Ascending aorta (tissue), 2 donors: ENCODE measurements at regions of chr13 and their contacts with region 1.

Region 1: DNA sequence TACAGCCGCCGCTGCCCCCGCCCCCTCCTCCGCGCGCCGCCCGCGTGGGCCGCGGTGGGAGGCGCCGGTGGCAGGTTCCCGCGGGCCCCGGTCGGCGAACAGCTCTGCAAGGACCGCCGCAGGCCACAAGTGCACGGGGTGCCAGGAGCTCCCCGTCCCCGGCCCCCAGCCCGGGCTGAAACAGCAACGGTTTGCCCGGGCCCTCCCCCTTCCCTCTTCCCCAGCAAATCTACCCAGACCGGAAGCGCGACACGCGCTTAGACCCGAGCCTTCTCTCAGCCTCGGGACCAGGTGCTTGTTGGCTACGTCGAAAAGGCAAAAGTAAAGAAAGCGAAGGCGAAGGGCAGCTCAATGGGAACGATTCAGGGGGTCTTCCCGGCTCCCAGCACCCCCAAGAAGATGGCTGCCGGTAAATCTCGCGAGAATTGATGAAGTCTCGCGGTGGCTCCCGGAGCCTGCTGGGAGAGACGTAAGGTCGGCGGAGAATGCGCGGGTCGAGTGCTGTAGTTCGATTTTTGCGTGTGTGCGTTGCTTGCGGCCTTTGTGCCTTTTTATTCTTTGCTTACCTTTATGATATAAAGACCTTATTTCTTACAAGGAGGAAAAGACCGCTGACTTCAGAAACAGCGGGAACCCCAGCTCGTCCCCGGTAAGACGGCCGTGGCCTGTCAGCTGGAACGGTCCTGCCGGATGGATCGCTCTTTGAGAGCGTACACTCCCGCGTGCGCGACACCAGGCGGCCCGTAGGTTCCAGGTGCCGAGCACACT is at the start of gene RBM26:
- DNase-seq: peak; percentile 72 to 95
- H3K4me3 ChIP-seq: peak within 1 kb of the TSS; percentile 99 to 100
- H3K27ac ChIP-seq: peak within 1 kb of the TSS; percentile 94 to 99
- H3K4me1 ChIP-seq: peaks cover 0 to 35% of the 10 kb centered on the region in 2 donors
- H3K27me3 ChIP-seq: no peaks in the 10 kb centered on the region
- CTCF ChIP-seq: peak in 1 of 3 experiments; percentile 10
- total RNA-seq, gene RBM26: 12.8 TPM

Region 2: GRCh38 chr13:78658635-78659449 is 747.2 kb before region 1 on chr13 and contains the start of gene OBI1:
- intact Hi-C with region 1: loop called (anchors 10 kb)
- DNase-seq: peak; percentile 59 to 95
- H3K4me3 ChIP-seq: peak within 1 kb of the TSS; percentile 94 to 96
- H3K27ac ChIP-seq: peak within 1 kb of the TSS; percentile 59 to 62
- H3K4me1 ChIP-seq: peaks cover 3 to 12% of the 10 kb centered on the region in 2 donors
- H3K27me3 ChIP-seq: no peaks in the 10 kb centered on the region
- CTCF ChIP-seq: no peak
- total RNA-seq, gene OBI1: 1.8 TPM

Region 3: GRCh38 chr13:79194272-79194671 is 211.7 kb before region 1 on chr13:
- intact Hi-C with region 1: no loop called
- DNase-seq: no peak
- H3K4me3 ChIP-seq: no peak overlapping the region
- H3K27ac ChIP-seq: no peak overlapping the region
- H3K4me1 ChIP-seq: no peaks in the 10 kb centered on the region
- H3K27me3 ChIP-seq: no peaks in the 10 kb centered on the region
- CTCF ChIP-seq: no peak

Region 4: GRCh38 chr13:79307866-79308298 is 98.1 kb before region 1 on chr13:
- intact Hi-C with region 1: no loop called
- DNase-seq: no peak
- H3K4me3 ChIP-seq: no peak overlapping the region
- H3K27ac ChIP-seq: no peak overlapping the region
- H3K4me1 ChIP-seq: no peaks in the 10 kb centered on the region
- H3K27me3 ChIP-seq: no peaks in the 10 kb centered on the region
- CTCF ChIP-seq: no peak

Region 5: GRCh38 chr13:79480954-79481684 is 75.1 kb after region 1 on chr13 and contains the start of gene NDFIP2:
- intact Hi-C with region 1: loop called (anchors 2 kb)
- DNase-seq: peak; percentile 24 to 91
- H3K4me3 ChIP-seq: peak within 1 kb of the TSS; percentile 68 to 74
- H3K27ac ChIP-seq: peak within 1 kb of the TSS; percentile 30 to 39
- H3K4me1 ChIP-seq: peaks cover 2 to 9% of the 10 kb centered on the region in 2 donors
- H3K27me3 ChIP-seq: no peaks in the 10 kb centered on the region
- CTCF ChIP-seq: no peak
- total RNA-seq, gene NDFIP2: 16.6 TPM